MCF 10A (cell line): ENCODE measurements at regions of chrX and their contacts with region 1.

Region 1: GRCh38 chrX:111445486-111445885 is 33.5 kb upstream of the DCX start:
- DNase-seq: peak; percentile 69
- H3K4me3 Mint-ChIP-seq: no peak overlapping the region
- H3K27ac Mint-ChIP-seq: no peak overlapping the region
- H3K4me1 Mint-ChIP-seq: no peaks in the 10 kb centered on the region
- H3K27me3 Mint-ChIP-seq: peaks cover 58% of the 10 kb centered on the region
- CTCF ChIP-seq: peak; percentile 54

Region 2: DNA sequence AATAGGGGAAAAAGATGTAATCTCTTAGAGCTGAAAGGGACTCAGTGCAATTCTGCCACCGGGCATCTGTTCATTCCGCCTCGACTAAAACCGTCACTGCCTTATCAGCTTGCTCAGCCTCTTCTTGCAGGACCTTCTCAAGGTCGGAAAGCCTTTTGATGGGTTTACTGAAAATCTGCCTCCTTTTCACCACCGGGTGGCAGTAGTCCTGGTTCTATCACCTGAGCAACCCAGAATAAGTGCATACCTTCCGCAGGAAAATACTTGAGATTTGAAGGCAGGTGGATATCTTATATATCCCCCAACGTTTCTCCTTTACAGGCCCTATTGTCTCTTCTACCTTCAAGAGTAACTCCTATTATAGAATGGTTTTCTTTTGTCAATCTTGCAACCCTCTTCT is 452.9 kb before region 1 on chrX:
- CTCF ChIA-PET with region 1: interaction called, 8 read pairs
- POLR2A ChIA-PET with region 1: no interaction called
- intact Hi-C with region 1: loop called (anchors 5 kb)
- DNase-seq: peak; percentile 51
- H3K4me3 Mint-ChIP-seq: no peak overlapping the region
- H3K27ac Mint-ChIP-seq: no peak overlapping the region
- H3K4me1 Mint-ChIP-seq: no peaks in the 10 kb centered on the region
- H3K27me3 Mint-ChIP-seq: peaks cover 67% of the 10 kb centered on the region
- CTCF ChIP-seq: peak; percentile 34

Region 3: DNA sequence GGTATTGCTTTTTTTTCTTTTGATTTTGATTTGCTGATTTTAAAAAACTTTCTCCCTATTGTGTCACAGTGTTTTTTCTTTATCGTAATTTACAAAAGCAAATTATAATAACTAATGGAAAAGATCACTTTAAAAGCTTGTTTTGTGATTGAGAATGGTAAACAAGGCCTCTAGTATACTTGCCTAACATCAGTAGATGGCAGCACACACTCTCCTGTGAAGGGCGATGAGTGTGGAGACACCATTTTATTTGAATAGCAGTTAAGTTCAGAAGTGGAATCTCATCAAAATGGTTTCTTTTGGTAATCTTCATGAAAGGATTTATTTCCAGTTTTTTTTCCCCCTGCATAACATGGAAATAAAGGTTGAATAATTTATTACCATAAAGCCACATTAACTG is 277.2 kb before region 1 on chrX:
- CTCF ChIA-PET with region 1: interaction called, 7 read pairs
- POLR2A ChIA-PET with region 1: no interaction called
- intact Hi-C with region 1: loop called (anchors 1 kb)
- DNase-seq: peak; percentile 24
- H3K4me3 Mint-ChIP-seq: no peak overlapping the region
- H3K27ac Mint-ChIP-seq: no peak overlapping the region
- H3K4me1 Mint-ChIP-seq: no peaks in the 10 kb centered on the region
- H3K27me3 Mint-ChIP-seq: peaks cover 81% of the 10 kb centered on the region
- CTCF ChIP-seq: peak; percentile 12

Region 4: DNA sequence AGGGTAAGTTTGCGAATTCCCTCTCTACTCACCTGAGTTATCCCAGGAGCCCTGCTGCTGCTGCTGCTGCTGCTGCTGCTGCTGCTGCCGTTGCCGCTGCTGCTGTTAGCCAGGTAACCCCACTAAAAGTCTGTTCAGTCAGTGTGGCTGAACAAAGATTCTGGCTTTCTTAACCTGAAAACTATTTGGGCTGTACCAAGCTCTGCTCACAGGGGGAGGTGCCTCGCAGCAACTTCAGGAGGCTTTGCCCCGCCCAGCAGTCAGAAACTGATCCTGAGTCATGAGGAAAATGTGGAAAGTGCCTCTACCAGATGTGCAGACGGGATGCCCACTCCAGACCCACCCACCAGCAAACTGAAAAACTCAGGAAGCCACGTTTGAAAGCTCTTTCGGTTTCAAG is 175.1 kb before region 1 on chrX and contains the start of gene CAPN6:
- CTCF ChIA-PET with region 1: interaction called, 3 read pairs
- POLR2A ChIA-PET with region 1: no interaction called
- intact Hi-C with region 1: loop called (anchors 5 kb)
- DNase-seq: peak; percentile 52
- H3K4me3 Mint-ChIP-seq: no peak within 1 kb of the TSS
- H3K27ac Mint-ChIP-seq: no peak within 1 kb of the TSS
- H3K4me1 Mint-ChIP-seq: peaks cover 4% of the 10 kb centered on the region
- H3K27me3 Mint-ChIP-seq: peaks cover 89% of the 10 kb centered on the region
- CTCF ChIP-seq: no peak
- total RNA-seq, gene CAPN6: 0.37 TPM in 1 of 2 replicates, not detected in the other

Region 5: GRCh38 chrX:111435469-111435868 is 10.0 kb before region 1 on chrX:
- CTCF ChIA-PET with region 1: interaction called, 27 read pairs
- POLR2A ChIA-PET with region 1: no interaction called
- intact Hi-C with region 1: no loop called
- DNase-seq: no peak
- H3K4me3 Mint-ChIP-seq: no peak overlapping the region
- H3K27ac Mint-ChIP-seq: no peak overlapping the region
- H3K4me1 Mint-ChIP-seq: no peaks in the 10 kb centered on the region
- H3K27me3 Mint-ChIP-seq: peaks cover 73% of the 10 kb centered on the region
- CTCF ChIP-seq: no peak

Region 6: DNA sequence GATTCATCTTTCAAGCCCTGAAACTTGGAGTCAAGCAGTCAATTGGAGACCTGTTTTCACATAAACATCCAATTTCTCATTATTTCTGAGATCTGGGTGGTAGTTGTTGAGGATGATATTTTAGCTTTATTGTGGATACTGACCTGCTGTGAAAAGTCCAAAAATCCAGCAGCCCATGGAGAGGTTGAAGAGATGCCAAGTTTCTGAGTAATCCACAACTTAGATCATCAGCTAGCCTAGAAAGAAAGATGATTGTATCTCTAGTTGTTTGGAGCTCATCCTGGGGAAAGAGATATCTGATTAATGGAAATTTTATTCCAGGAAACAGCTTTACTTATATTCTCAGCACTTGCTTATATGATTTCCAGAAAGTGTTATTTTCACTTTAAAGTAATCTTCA is 15.1 kb after region 1 on chrX:
- CTCF ChIA-PET with region 1: interaction called, 14 read pairs
- POLR2A ChIA-PET with region 1: interaction called, 3 read pairs
- intact Hi-C with region 1: no loop called
- DNase-seq: peak; percentile 4
- H3K4me3 Mint-ChIP-seq: no peak overlapping the region
- H3K27ac Mint-ChIP-seq: no peak overlapping the region
- H3K4me1 Mint-ChIP-seq: no peaks in the 10 kb centered on the region
- H3K27me3 Mint-ChIP-seq: peaks cover 54% of the 10 kb centered on the region
- CTCF ChIP-seq: no peak

Region 7: GRCh38 chrX:111615227-111615626 is 169.7 kb after region 1 on chrX:
- CTCF ChIA-PET with region 1: no interaction called
- POLR2A ChIA-PET with region 1: no interaction called
- intact Hi-C with region 1: no loop called
- DNase-seq: peak; percentile 1
- H3K4me3 Mint-ChIP-seq: no peak overlapping the region
- H3K27ac Mint-ChIP-seq: no peak overlapping the region
- H3K4me1 Mint-ChIP-seq: no peaks in the 10 kb centered on the region
- H3K27me3 Mint-ChIP-seq: peaks cover 9% of the 10 kb centered on the region
- CTCF ChIP-seq: no peak

Region 8: GRCh38 chrX:111652719-111653118 is 207.2 kb after region 1 on chrX:
- CTCF ChIA-PET with region 1: interaction called, 4 read pairs
- POLR2A ChIA-PET with region 1: interaction called, 3 read pairs
- intact Hi-C with region 1: loop called (anchors 1 kb)
- DNase-seq: peak; percentile 28
- H3K4me3 Mint-ChIP-seq: no peak overlapping the region
- H3K27ac Mint-ChIP-seq: no peak overlapping the region
- H3K4me1 Mint-ChIP-seq: no peaks in the 10 kb centered on the region
- H3K27me3 Mint-ChIP-seq: peaks cover 42% of the 10 kb centered on the region
- CTCF ChIP-seq: peak; percentile 20

Region 9: DNA sequence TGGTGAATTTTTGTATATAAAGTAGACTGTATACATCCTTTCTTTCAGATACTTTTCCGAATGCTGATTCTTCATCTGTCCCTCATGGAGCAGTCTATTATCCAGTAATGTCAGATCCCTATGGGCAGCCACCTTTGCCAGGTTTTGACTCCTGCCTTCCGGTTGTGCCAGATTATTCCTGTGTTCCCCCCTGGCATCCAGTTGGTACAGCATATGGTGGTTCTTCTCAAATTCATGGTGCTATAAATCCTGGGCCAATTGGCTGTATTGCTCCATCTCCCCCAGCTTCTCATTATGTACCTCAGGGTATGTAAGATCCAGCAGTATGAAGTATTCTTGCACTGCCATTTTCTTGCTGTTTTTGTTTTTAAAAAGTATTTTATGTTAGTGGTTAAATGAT is 314.2 kb after region 1 on chrX:
- CTCF ChIA-PET with region 1: no interaction called
- POLR2A ChIA-PET with region 1: no interaction called
- intact Hi-C with region 1: no loop called
- DNase-seq: no peak
- H3K4me3 Mint-ChIP-seq: no peak overlapping the region
- H3K27ac Mint-ChIP-seq: no peak overlapping the region
- H3K4me1 Mint-ChIP-seq: no peaks in the 10 kb centered on the region
- H3K27me3 Mint-ChIP-seq: peaks cover 78% of the 10 kb centered on the region
- CTCF ChIP-seq: no peak

Region 10: DNA sequence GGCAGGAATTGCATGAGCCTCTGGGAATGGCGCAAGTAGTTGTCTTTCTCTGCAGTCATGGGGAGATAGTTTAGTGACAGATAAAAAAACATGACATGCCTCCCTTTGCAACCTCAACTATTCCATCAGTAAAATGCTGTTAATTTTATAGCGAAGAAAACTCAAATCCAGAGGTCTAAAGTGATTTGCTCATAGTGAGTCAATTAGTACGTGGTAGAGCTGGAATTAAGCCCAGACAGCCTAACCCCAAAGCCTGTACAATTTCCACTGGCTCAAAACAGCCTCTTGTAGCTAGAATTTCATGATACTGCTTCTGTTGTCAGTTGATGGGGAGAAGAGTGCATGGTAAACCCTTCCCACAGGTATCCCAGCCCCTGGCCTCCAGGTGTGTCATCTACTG is 718.4 kb after region 1 on chrX:
- CTCF ChIA-PET with region 1: no interaction called
- POLR2A ChIA-PET with region 1: no interaction called
- intact Hi-C with region 1: no loop called
- DNase-seq: peak; percentile 15
- H3K4me3 Mint-ChIP-seq: no peak overlapping the region
- H3K27ac Mint-ChIP-seq: no peak overlapping the region
- H3K4me1 Mint-ChIP-seq: no peaks in the 10 kb centered on the region
- H3K27me3 Mint-ChIP-seq: peaks cover 61% of the 10 kb centered on the region
- CTCF ChIP-seq: no peak